CD4-positive, alpha-beta T cell (primary cell): ENCODE measurements at regions of chr6 and their contacts with region 1.

Region 1: DNA sequence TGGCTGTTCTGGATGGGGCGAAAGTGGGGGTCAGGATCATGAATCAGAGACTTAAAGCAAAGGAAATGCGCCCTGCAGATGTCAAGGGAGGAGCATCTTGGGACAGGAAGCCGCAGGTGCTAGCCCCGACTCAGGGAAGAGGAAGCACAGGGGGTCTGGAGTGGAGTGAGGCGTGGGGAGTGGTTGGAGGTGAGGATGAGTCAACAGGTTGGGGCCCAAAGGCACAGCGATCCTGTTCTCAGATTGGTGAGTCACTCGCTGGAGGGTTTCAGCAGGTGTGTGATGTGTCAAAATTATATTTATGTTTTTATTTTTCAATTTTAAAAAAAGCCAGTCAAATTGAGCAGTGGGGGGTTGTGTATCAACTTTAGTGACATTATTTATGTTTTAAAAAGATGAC is 19.0 kb downstream of the PACSIN1 start:
- DNase-seq: peak; percentile 19 to 82 (median 65)
- ATAC-seq: peak; percentile 93
- H3K4me3 ChIP-seq: peak overlapping the region; percentile 6
- H3K4me3 Mint-ChIP-seq: peak overlapping the region; percentile 39
- H3K27ac ChIP-seq: no peak overlapping the region
- H3K27ac Mint-ChIP-seq: peak overlapping the region; percentile 68
- H3K4me1 ChIP-seq: peaks cover 24% of the 10 kb centered on the region
- H3K4me1 Mint-ChIP-seq: peaks cover 36% of the 10 kb centered on the region
- H3K27me3 ChIP-seq: no peaks in the 10 kb centered on the region
- H3K27me3 Mint-ChIP-seq: no peaks in the 10 kb centered on the region
- CTCF ChIP-seq: no peak

Region 2: GRCh38 chr6:34839666-34840352 is 354.9 kb after region 1 on chr6:
- CTCF ChIA-PET with region 1: no interaction called
- POLR2A ChIA-PET with region 1: no interaction called
- intact Hi-C with region 1: no loop called
- DNase-seq: no peak
- ATAC-seq: no peak
- H3K4me3 ChIP-seq: no peak overlapping the region
- H3K4me3 Mint-ChIP-seq: no peak overlapping the region
- H3K27ac ChIP-seq: no peak overlapping the region
- H3K27ac Mint-ChIP-seq: no peak overlapping the region
- H3K4me1 ChIP-seq: no peaks in the 10 kb centered on the region
- H3K4me1 Mint-ChIP-seq: no peaks in the 10 kb centered on the region
- H3K27me3 ChIP-seq: no peaks in the 10 kb centered on the region
- H3K27me3 Mint-ChIP-seq: no peaks in the 10 kb centered on the region
- CTCF ChIP-seq: no peak

Region 3: GRCh38 chr6:35096129-35096862 is 611.4 kb after region 1 on chr6:
- CTCF ChIA-PET with region 1: no interaction called
- POLR2A ChIA-PET with region 1: no interaction called
- intact Hi-C with region 1: loop called in 1 of 2 experiments (anchors 5 kb)
- DNase-seq: no peak
- ATAC-seq: no peak
- H3K4me3 ChIP-seq: no peak overlapping the region
- H3K4me3 Mint-ChIP-seq: no peak overlapping the region
- H3K27ac ChIP-seq: no peak overlapping the region
- H3K27ac Mint-ChIP-seq: no peak overlapping the region
- H3K4me1 ChIP-seq: no peaks in the 10 kb centered on the region
- H3K4me1 Mint-ChIP-seq: no peaks in the 10 kb centered on the region
- H3K27me3 ChIP-seq: no peaks in the 10 kb centered on the region
- H3K27me3 Mint-ChIP-seq: no peaks in the 10 kb centered on the region
- CTCF ChIP-seq: no peak